ENCODE measurements at regions of chr2 and their contacts with region 1.

Region 1: DNA sequence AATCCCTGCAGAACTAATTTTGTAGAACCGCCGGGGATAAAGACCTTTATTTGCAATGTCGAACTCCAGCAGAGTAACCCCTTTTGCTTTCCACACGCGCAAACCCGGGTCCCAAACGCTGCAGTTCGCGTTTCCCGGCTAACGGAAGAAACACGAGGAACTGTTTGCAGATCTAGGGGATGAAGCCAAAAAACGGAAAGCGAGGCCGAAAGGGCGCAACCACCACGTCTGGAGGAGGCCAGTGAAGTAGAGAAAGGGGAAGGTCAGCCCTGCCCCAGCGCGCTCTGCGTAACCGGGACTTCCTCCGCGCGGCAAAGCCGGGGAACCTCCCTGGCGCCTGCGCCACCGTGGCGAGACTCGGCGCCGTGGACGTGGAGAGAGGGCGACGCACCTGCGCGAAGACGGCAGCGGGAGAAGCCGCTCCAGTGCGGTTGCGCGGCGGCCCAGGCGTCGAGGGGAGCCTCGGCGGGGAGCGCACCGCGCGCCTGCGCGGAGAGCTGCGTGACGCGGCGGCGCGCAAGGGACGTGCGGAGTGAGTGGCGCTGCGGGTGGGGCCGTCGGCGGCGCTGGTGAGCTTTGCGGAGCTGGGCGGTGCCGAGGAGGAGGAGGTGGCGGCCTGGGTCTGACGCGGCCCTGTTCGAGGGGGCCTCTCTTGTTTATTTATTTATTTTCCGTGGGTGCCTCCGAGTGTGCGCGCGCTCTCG is at the start of gene PPP1CB:
- DNase-seq: peak; percentile 97
- ATAC-seq: peak; percentile 85
- H3K4me3 ChIP-seq: peak within 1 kb of the TSS; percentile 88
- H3K27ac ChIP-seq: peak within 1 kb of the TSS; percentile 91
- H3K4me1 ChIP-seq: peaks cover 42% of the 10 kb centered on the region
- H3K27me3 ChIP-seq: no peaks in the 10 kb centered on the region
- CTCF ChIP-seq: peak; percentile 23; the same call in 1 of the 2 replicates
- total RNA-seq, gene PPP1CB: 84.2 and 101 TPM in 2 replicates

Region 2: GRCh38 chr2:28610583-28611201 is 140.7 kb before region 1 on chr2:
- CTCF ChIA-PET with region 1: interaction called, 5 read pairs
- POLR2A ChIA-PET with region 1: interaction called, 4 read pairs
- intact Hi-C with region 1: loop called (anchors 1 kb)
- DNase-seq: peak; percentile 99
- ATAC-seq: peak; percentile 87
- H3K4me3 ChIP-seq: no peak overlapping the region
- H3K27ac ChIP-seq: peak overlapping the region; percentile 94
- H3K4me1 ChIP-seq: peaks cover 53% of the 10 kb centered on the region
- H3K27me3 ChIP-seq: no peaks in the 10 kb centered on the region
- CTCF ChIP-seq: no peak

Region 3: GRCh38 chr2:28643911-28644334 is 107.5 kb before region 1 on chr2:
- CTCF ChIA-PET with region 1: no interaction called
- POLR2A ChIA-PET with region 1: interaction called, 7 read pairs
- intact Hi-C with region 1: loop called (anchors 1 kb)
- DNase-seq: peak; percentile 96
- ATAC-seq: peak; percentile 92
- H3K4me3 ChIP-seq: peak overlapping the region; percentile 28; the same call in 1 of the 2 replicates
- H3K27ac ChIP-seq: peak overlapping the region; percentile 96
- H3K4me1 ChIP-seq: peaks cover 68% of the 10 kb centered on the region
- H3K27me3 ChIP-seq: no peaks in the 10 kb centered on the region
- CTCF ChIP-seq: no peak

Region 4: GRCh38 chr2:28716265-28716867 is 35.0 kb before region 1 on chr2:
- CTCF ChIA-PET with region 1: no interaction called
- POLR2A ChIA-PET with region 1: interaction called, 5 read pairs
- intact Hi-C with region 1: loop called (anchors 5 kb)
- DNase-seq: peak; percentile 93
- ATAC-seq: peak; percentile 91
- H3K4me3 ChIP-seq: peak overlapping the region; percentile 10; the same call in 1 of the 2 replicates
- H3K27ac ChIP-seq: peak overlapping the region; percentile 80
- H3K4me1 ChIP-seq: peaks cover 48% of the 10 kb centered on the region
- H3K27me3 ChIP-seq: no peaks in the 10 kb centered on the region
- CTCF ChIP-seq: no peak

Region 5: GRCh38 chr2:28764909-28765711 is 13.7 kb after region 1 on chr2:
- CTCF ChIA-PET with region 1: no interaction called
- POLR2A ChIA-PET with region 1: no interaction called
- intact Hi-C with region 1: no loop called
- DNase-seq: no peak
- ATAC-seq: no peak
- H3K4me3 ChIP-seq: no peak overlapping the region
- H3K27ac ChIP-seq: no peak overlapping the region
- H3K4me1 ChIP-seq: no peaks in the 10 kb centered on the region
- H3K27me3 ChIP-seq: no peaks in the 10 kb centered on the region
- CTCF ChIP-seq: no peak

Region 6: GRCh38 chr2:29987146-29987545 is 1235.7 kb after region 1 on chr2:
- CTCF ChIA-PET with region 1: no interaction called
- POLR2A ChIA-PET with region 1: no interaction called
- intact Hi-C with region 1: no loop called
- DNase-seq: no peak
- ATAC-seq: no peak
- H3K4me3 ChIP-seq: no peak overlapping the region
- H3K27ac ChIP-seq: no peak overlapping the region
- H3K4me1 ChIP-seq: no peaks in the 10 kb centered on the region
- H3K27me3 ChIP-seq: peaks cover 27% of the 10 kb centered on the region
- CTCF ChIP-seq: no peak

Measured in PC-3 (cell line).